ENCODE measurements at regions of chr16 and their contacts with region 1.

Region 1: GRCh38 chr16:20900299-20901067 is at the starts of genes DCUN1D3 and LYRM1:
- DNase-seq: peak; percentile 75
- ATAC-seq: peak; percentile 76
- H3K4me3 Mint-ChIP-seq: peak within 1 kb of the TSS; percentile 91
- H3K27ac Mint-ChIP-seq: peak within 1 kb of the TSS; percentile 95
- H3K4me1 Mint-ChIP-seq: peaks cover 61% of the 10 kb centered on the region
- H3K27me3 Mint-ChIP-seq: no peaks in the 10 kb centered on the region
- CTCF ChIP-seq: no peak
- total RNA-seq, gene DCUN1D3: 4.1 and 4.7 TPM in 2 replicates
- total RNA-seq, gene LYRM1: 20.7 and 22.4 TPM in 2 replicates

Region 2: DNA sequence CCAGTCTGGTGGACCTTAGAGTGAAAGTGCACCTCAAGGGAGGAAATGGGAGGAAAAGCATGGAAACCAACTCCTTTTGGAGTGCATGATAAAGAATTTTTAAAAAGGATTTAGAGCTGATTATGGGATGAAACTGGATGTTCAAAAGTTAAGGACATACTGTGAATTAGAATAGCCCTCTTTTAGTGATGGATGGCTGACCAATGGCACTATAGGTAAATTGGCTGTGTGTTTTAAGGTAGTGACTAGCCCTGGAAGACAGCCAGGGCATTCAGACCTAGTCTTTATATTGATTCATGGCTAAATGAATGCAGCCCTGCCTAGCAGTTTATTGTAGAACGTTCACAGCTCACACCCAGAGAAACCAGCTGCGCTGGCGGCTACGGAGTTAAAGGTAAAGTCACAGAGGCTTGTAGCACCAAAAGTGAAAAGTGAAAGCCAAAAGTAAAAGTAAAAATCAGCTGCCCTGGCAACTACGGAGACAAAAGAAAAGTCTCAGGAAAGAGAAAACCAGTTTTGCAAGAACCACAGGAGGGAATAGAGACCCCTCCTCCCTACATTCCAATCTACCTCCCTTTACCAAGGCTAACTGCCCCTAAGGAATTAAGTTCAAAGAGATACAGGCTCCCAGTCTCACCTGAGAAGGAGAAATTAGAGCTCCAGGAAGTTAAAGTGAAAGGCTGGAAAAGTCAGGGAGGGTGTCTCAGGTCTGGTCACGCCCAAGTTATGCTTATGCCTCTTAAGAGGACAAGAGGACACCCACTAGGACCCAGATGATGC is 224.8 kb before region 1 on chr16:
- CTCF ChIA-PET with region 1: no interaction called
- POLR2A ChIA-PET with region 1: no interaction called
- intact Hi-C with region 1: loop called (anchors 5 kb)
- DNase-seq: no peak
- ATAC-seq: peak; percentile 50
- H3K4me3 Mint-ChIP-seq: peak overlapping the region; percentile 85
- H3K27ac Mint-ChIP-seq: peak overlapping the region; percentile 88
- H3K4me1 Mint-ChIP-seq: peaks cover 55% of the 10 kb centered on the region
- H3K27me3 Mint-ChIP-seq: no peaks in the 10 kb centered on the region
- CTCF ChIP-seq: no peak

Region 3: GRCh38 chr16:20763461-20764232 is 136.8 kb before region 1 on chr16 and contains the start of gene ACSM3:
- CTCF ChIA-PET with region 1: no interaction called
- POLR2A ChIA-PET with region 1: interaction called, 3 read pairs
- intact Hi-C with region 1: loop called (anchors 2 kb)
- DNase-seq: peak; percentile 26
- ATAC-seq: peak; percentile 100
- H3K4me3 Mint-ChIP-seq: peak within 1 kb of the TSS; percentile 90
- H3K27ac Mint-ChIP-seq: peak within 1 kb of the TSS; percentile 93
- H3K4me1 Mint-ChIP-seq: peaks cover 15% of the 10 kb centered on the region
- H3K27me3 Mint-ChIP-seq: no peaks in the 10 kb centered on the region
- CTCF ChIP-seq: no peak
- total RNA-seq, gene ACSM3: 12.8 and 13.6 TPM in 2 replicates

Region 4: DNA sequence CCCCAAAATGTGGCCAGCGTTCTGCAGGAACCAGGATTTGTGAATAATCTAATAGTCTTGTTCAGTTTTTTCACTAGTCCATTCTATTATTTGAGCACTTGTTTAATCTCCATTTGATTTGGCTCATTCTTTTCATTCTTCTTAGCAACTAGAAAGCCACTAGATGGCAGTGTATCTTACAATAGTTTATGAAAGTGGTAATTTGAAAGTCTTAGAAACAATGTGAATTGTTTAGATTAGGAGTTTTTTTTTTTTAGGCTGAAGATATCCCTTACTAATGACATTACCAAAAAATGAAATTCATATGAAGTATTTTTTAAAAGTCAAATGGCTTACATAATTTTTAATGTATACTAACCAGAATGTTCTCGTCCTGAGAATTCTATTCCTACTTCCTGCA is 100.9 kb before region 1 on chr16:
- CTCF ChIA-PET with region 1: no interaction called
- POLR2A ChIA-PET with region 1: no interaction called
- intact Hi-C with region 1: no loop called
- DNase-seq: no peak
- ATAC-seq: no peak
- H3K4me3 Mint-ChIP-seq: no peak overlapping the region
- H3K27ac Mint-ChIP-seq: no peak overlapping the region
- H3K4me1 Mint-ChIP-seq: no peaks in the 10 kb centered on the region
- H3K27me3 Mint-ChIP-seq: no peaks in the 10 kb centered on the region
- CTCF ChIP-seq: no peak

Region 5: GRCh38 chr16:20874088-20874581 is 26.3 kb before region 1 on chr16:
- CTCF ChIA-PET with region 1: interaction called, 3 read pairs
- POLR2A ChIA-PET with region 1: interaction called, 21 read pairs
- intact Hi-C with region 1: loop called (anchors 1 kb)
- DNase-seq: no peak
- ATAC-seq: no peak
- H3K4me3 Mint-ChIP-seq: peak overlapping the region; percentile 61
- H3K27ac Mint-ChIP-seq: peak overlapping the region; percentile 85
- H3K4me1 Mint-ChIP-seq: peaks cover 43% of the 10 kb centered on the region
- H3K27me3 Mint-ChIP-seq: no peaks in the 10 kb centered on the region
- CTCF ChIP-seq: no peak

Measured in activated B cell treated with CpG ODN at 0.5 μM for 24 hours (primary cell).